ENCODE measurements at regions of chr2 and their contacts with region 1.

Region 1: DNA sequence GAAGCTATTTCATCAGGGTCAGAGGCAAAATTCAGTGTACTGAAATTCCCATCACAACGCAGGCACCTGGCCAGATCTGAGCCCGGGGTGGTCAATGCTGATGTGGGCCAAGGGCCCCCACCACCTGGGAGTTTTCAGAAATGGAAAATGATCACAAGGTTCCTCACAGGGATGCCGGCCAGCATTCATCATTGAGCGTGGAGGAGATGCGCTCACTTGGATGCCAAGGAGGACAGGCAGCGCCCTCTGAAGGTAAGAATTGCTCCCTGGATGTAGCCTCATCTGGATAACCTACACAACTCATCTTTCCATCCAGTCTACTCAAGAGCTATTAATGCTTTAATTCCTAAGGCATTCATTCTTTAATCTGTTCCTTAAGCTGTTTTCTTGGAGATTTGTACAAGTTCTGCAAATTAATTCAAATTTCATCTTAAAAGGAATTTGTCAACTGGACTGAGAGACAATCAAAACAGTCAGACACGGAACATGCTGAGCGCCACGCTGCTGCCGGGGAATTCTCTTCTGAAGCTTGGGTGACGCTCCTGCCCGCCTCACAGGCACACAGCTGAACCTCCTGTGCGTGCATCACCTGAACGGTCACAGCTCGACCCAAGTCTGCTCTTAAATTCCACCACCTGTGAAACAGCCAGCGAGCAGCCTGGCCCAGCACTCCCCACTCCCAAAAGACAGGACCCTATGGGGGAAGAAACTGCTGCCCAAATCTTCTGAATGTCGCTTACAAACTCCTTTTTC is 206.7 kb downstream of the HDAC4 start:
- DNase-seq: no peak
- H3K4me3 ChIP-seq: no peak overlapping the region
- CTCF ChIP-seq: peak; percentile 31

Region 2: GRCh38 chr2:239106314-239106908 is 87.7 kb before region 1 on chr2:
- in situ Hi-C with region 1: no loop called
- DNase-seq: peak; percentile 48
- H3K4me3 ChIP-seq: no peak overlapping the region
- CTCF ChIP-seq: peak; percentile 77

Region 3: DNA sequence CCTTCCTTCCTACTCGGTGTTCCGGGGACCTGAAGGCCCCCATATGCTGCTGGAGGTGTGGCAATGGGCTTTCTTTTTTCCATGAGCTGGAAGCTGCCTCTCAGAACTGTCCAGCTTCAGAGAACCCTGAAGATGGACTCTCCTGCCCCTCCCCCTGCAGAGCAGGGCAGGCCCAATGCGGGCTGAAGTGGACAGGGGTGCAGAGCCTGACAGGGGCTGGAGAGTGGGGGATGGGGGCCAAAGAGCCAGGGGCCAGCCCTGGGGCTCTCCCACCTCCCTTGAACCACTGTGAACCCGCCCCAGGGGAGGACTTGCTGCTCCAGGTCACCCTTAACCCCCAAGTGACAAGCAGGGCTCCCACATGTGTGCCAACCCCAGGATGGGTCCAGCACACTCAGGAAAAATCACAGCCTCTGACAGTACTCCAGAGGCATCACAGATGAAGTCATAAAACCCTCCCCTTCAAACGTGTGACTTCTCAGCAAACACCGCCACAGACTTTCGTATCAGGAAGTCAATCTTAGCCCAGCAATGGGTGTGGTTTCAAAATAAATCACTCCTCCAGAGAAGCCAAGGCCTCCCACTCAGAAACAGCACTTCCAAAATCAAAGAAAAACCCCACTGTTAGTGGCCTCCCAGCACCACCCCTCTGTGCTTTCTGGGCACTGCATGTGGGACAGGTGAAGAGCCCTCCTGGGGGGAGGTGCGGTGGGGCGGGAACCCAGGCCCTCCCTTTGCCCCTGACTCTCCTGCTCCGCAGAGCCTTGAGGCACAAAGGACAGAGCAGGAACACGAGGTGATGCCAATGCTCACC is 70.9 kb after region 1 on chr2:
- in situ Hi-C with region 1: loop called (anchors 5 kb)
- DNase-seq: no peak
- H3K4me3 ChIP-seq: no peak overlapping the region
- CTCF ChIP-seq: no peak